Spleen (tissue), 13 donors: ENCODE measurements at regions of chr2 and their contacts with region 1.

Region 1: GRCh38 chr2:234550511-234551107 is 53.7 kb upstream of the ARL4C start:
- DNase-seq: no peak
- H3K4me3 ChIP-seq: no peak overlapping the region
- H3K27ac ChIP-seq: no peak overlapping the region
- H3K4me1 ChIP-seq: peaks cover 0 to 12% (median 10%) of the 10 kb centered on the region in 6 donors
- H3K27me3 ChIP-seq: peaks cover 0 to 27% (median 0%) of the 10 kb centered on the region in 7 donors
- CTCF ChIP-seq: peak; percentile 77 to 94 (median 87)
- POLR2A ChIP-seq: no peak

Region 2: GRCh38 chr2:235116885-235117492 is 566.4 kb after region 1 on chr2:
- intact Hi-C with region 1: loop called (anchors 5 kb)
- DNase-seq: no peak
- H3K4me3 ChIP-seq: no peak overlapping the region
- H3K27ac ChIP-seq: no peak overlapping the region
- H3K4me1 ChIP-seq: no peaks in the 10 kb centered on the region
- H3K27me3 ChIP-seq: peaks cover 0 to 6% (median 0%) of the 10 kb centered on the region in 7 donors
- CTCF ChIP-seq: peak; percentile 39 to 73 (median 61)
- POLR2A ChIP-seq: no peak